Activated naive CD4-positive, alpha-beta T cell treated with anti-CD3 and anti-CD28 coated beads for 36 hours (primary cell): ENCODE measurements at regions of chr14 and their contacts with region 1.

Region 1: GRCh38 chr14:23095196-23096108 is at the start of gene C14orf119:
- DNase-seq: peak; percentile 100
- H3K4me3 Mint-ChIP-seq: no peak within 1 kb of the TSS
- H3K27ac Mint-ChIP-seq: no peak within 1 kb of the TSS
- H3K4me1 Mint-ChIP-seq: peaks cover 38% of the 10 kb centered on the region
- H3K27me3 Mint-ChIP-seq: no peaks in the 10 kb centered on the region
- total RNA-seq, gene C14orf119: 39.8 to 44.2 TPM

Region 2: GRCh38 chr14:21924479-21924878 is 1171.0 kb before region 1 on chr14:
- CTCF ChIA-PET with region 1: no interaction called
- intact Hi-C with region 1: loop called (anchors 5 kb)
- DNase-seq: peak; percentile 74
- H3K4me3 Mint-ChIP-seq: peak overlapping the region; percentile 52
- H3K27ac Mint-ChIP-seq: peak overlapping the region; percentile 90
- H3K4me1 Mint-ChIP-seq: peaks cover 53% of the 10 kb centered on the region
- H3K27me3 Mint-ChIP-seq: no peaks in the 10 kb centered on the region

Region 3: DNA sequence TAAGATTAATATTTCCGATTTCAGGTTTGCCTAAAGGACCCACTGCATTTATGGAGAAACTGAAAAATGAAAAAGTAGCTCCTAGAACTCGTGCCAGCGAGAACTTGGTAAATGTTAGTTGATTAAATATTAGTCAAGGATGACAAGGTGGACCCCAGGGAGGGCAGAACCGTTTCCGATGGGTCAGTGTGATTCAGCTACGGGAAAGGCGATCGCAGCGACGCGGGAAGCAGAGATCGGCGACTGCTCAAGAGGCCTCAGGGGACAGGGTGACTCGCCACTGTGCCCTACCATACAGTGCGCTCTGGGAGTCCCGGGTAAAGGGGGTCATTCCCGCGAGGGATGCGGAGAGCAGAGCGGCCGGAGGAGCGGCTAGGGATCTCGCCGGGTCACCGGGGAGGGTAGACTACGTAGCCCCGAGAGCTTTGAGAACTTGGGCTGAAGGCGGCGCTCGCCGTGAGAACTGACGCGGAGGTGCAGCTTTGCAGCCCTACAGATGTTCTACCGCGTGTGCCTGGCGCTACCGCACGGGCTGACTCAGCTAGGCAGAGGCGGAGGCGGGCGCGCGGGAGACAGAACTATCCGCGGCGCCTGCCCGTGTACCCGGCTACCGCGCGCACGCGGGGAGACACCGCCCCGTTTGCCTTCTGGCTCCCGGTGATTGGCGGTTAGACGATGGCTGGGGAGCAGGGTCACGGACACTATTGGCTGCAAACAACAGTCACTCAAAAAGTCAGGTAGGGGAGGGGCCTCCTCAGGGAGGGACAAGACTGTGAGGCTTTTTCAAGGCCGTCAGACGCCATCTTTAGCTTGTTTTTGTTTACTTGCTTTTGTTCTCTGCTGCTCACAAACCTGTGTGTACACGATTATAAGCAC is 88.7 kb before region 1 on chr14:
- CTCF ChIA-PET with region 1: interaction called, 3 read pairs
- intact Hi-C with region 1: loop called (anchors 1 kb)
- DNase-seq: peak; percentile 99
- H3K4me3 Mint-ChIP-seq: peak overlapping the region; percentile 96
- H3K27ac Mint-ChIP-seq: peak overlapping the region; percentile 98
- H3K4me1 Mint-ChIP-seq: peaks cover 36% of the 10 kb centered on the region
- H3K27me3 Mint-ChIP-seq: no peaks in the 10 kb centered on the region

Region 4: DNA sequence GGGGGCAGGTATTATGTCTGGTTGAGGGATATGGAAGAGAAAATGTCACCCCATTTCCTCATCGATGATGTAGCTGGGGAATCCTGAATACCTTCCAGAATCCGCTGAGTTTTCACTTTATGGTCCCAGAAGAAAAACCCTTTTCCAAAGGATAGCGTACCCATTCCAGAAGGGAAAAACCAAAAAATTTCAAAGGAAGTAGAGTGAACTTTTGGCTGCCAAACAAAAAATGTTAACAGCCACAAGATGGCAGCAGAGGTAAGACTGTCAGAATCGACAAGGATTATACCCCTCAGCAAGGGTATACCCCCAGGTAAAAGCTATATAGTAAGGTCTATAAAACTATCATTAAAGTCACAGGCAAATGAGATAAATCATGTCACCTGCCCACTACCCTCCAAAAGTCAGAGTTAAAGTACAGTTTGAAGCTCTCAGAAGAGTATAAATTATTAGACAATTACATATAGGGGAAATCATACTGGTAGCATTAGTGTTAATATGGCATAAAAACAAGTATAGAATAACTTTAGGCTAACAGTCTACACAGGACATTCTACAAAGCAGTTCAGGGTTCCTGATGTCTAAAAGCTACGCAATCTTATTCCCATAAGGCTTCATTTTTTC is 18.6 kb before region 1 on chr14:
- CTCF ChIA-PET with region 1: interaction called, 45 read pairs
- intact Hi-C with region 1: no loop called
- DNase-seq: peak; percentile 37
- H3K4me3 Mint-ChIP-seq: no peak overlapping the region
- H3K27ac Mint-ChIP-seq: no peak overlapping the region
- H3K4me1 Mint-ChIP-seq: peaks cover 9% of the 10 kb centered on the region
- H3K27me3 Mint-ChIP-seq: no peaks in the 10 kb centered on the region

Region 5: GRCh38 chr14:23154964-23155587 is 59.6 kb after region 1 on chr14:
- CTCF ChIA-PET with region 1: no interaction called
- intact Hi-C with region 1: no loop called
- DNase-seq: no peak
- H3K4me3 Mint-ChIP-seq: no peak overlapping the region
- H3K27ac Mint-ChIP-seq: no peak overlapping the region
- H3K4me1 Mint-ChIP-seq: peaks cover 28% of the 10 kb centered on the region
- H3K27me3 Mint-ChIP-seq: no peaks in the 10 kb centered on the region

Region 6: DNA sequence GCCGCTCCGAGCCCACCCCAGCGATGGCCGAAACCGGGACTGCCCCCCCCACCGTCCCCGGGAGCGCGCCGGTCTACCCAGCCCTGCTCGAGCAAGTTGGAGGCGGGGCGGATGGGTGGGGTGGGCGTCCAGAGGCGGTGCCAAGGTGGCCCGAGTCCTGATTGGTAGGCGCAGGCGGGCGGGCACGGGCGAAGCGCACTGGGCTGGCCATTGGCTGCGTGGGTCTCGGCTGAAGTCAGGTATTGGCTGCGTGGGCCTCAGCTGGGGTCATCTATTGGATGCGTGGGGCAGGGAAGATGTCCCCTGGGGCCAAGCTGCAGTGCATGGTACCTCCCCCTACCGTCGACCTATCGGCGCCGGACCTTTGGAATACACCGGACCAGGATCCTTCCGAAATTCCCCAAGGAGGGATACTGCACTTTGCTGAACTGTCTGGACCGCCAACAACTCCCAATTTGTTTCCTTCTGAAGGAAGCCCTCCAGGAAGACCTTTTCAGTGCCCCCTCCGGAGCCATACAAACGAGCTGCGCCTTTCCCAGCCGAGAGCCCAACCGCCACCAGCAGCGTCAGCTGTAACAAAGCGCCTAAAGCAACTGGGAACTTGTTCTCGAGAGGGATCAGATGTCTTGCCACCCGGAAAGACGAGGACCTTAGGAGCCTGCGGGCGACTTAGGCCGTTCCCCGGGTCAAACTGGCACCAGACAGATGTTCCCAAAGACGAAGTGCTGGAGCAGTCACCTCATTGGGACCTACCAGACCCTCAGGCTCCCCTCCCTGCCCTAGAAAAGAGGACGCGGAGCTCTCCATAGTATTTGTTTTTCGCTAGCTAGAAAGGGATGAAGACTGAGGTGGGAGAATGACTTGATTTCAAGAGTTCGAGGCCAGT is 190.8 kb after region 1 on chr14 and contains the start of gene HOMEZ:
- CTCF ChIA-PET with region 1: no interaction called
- intact Hi-C with region 1: loop called (anchors 1 kb)
- DNase-seq: peak; percentile 99
- H3K4me3 Mint-ChIP-seq: peak within 1 kb of the TSS; percentile 99
- H3K27ac Mint-ChIP-seq: peak within 1 kb of the TSS; percentile 96
- H3K4me1 Mint-ChIP-seq: peaks cover 29% of the 10 kb centered on the region
- H3K27me3 Mint-ChIP-seq: no peaks in the 10 kb centered on the region
- total RNA-seq, gene HOMEZ: 6.3 to 7.8 TPM

Region 7: GRCh38 chr14:23555882-23556699 is 460.6 kb after region 1 on chr14 and contains the start of gene THTPA:
- CTCF ChIA-PET with region 1: no interaction called
- intact Hi-C with region 1: loop called (anchors 2 kb)
- DNase-seq: peak; percentile 96
- H3K4me3 Mint-ChIP-seq: peak within 1 kb of the TSS; percentile 95
- H3K27ac Mint-ChIP-seq: peak within 1 kb of the TSS; percentile 94
- H3K4me1 Mint-ChIP-seq: peaks cover 38% of the 10 kb centered on the region
- H3K27me3 Mint-ChIP-seq: no peaks in the 10 kb centered on the region
- total RNA-seq, gene THTPA: 6.2 to 6.6 TPM